ENCODE measurements at regions of chr19 and their contacts with region 1.

Region 1: DNA sequence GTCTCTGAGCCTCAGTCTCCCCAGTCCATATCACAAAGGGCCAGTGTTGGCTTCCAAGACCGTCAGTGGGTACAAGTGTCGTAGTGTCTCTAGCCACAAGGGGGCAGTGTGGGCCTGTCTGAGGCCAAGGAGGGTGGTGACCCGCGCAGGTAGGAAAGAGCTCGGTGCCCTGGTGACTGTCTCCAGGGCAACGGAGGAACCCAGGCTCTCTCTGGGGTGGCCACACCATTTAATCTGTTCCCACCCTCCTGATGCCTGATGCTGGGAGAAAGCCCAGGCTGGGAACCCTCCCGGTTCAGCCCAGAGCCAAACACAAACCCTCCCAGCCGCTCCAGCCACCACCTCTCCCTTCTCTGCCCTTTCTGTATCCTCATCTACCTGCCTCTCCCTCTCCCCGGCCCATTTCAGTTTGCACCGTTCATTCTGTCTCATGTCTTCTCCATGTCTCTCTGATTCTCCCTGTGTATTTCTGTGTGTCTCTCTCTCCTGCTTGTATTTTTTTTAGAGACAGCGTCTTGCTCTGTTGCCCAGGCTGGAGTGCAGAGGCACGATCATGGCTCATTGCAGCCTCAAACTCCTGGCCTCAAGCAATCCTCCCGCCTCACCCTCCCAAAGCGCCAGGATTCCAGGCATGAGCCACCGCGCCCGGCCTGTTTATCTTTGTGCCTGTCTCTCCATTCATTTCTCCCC is 17.5 kb upstream of the MEIS3 start:
- DNase-seq: peak; percentile 79 to 85 (median 80)
- ATAC-seq: peak; percentile 97
- H3K4me3 ChIP-seq: no peak overlapping the region
- H3K27ac ChIP-seq: no peak overlapping the region
- H3K4me1 ChIP-seq: peaks cover 0 to 4% of the 10 kb centered on the region in 2 experiments; a peak in 2 of 5 replicates
- H3K27me3 ChIP-seq: peaks cover 3 to 6% of the 10 kb centered on the region in 2 experiments; a peak in 1 of 5 replicates
- CTCF ChIP-seq: peak; percentile 89 to 93 (median 93)
- EP300 ChIP-seq: no peak
- POLR2A ChIP-seq: no peak
- RAD21 ChIP-seq: peak; percentile 93 to 98

Region 2: GRCh38 chr19:46967578-46968027 is 469.3 kb before region 1 on chr19:
- CTCF ChIA-PET with region 1: no interaction called
- POLR2A ChIA-PET with region 1: no interaction called
- in situ Hi-C with region 1: no loop called
- intact Hi-C with region 1: no loop called
- DNase-seq: no peak
- ATAC-seq: no peak
- H3K4me3 ChIP-seq: no peak overlapping the region
- H3K27ac ChIP-seq: no peak overlapping the region
- H3K4me1 ChIP-seq: no peaks in the 10 kb centered on the region; a peak in 1 of 5 replicates
- H3K27me3 ChIP-seq: no peaks in the 10 kb centered on the region
- CTCF ChIP-seq: no peak
- EP300 ChIP-seq: no peak
- POLR2A ChIP-seq: no peak
- RAD21 ChIP-seq: no peak

Region 3: GRCh38 chr19:47483800-47484690 is 47.2 kb after region 1 on chr19 and contains the start of gene KPTN:
- CTCF ChIA-PET with region 1: interaction called, 3 read pairs
- POLR2A ChIA-PET with region 1: no interaction called
- in situ Hi-C with region 1: no loop called
- intact Hi-C with region 1: loop called (anchors 5 kb)
- DNase-seq: peak; percentile 92 to 94 (median 94)
- ATAC-seq: peak; percentile 89
- H3K4me3 ChIP-seq: peak within 1 kb of the TSS; percentile 67
- H3K27ac ChIP-seq: peak within 1 kb of the TSS; percentile 88
- H3K4me1 ChIP-seq: peaks cover 7 to 44% of the 10 kb centered on the region in 2 experiments; a peak in 3 of 5 replicates
- H3K27me3 ChIP-seq: no peaks in the 10 kb centered on the region
- CTCF ChIP-seq: peak; percentile 94 to 99 (median 97)
- EP300 ChIP-seq: no peak; the same call in 1 of the 2 replicates
- POLR2A ChIP-seq: peak; percentile 87
- RAD21 ChIP-seq: peak; percentile 69 to 83
- polyA plus RNA-seq, gene KPTN: 0.56 to 2.7 TPM

Region 4: GRCh38 chr19:47507924-47508553 is 71.2 kb after region 1 on chr19:
- CTCF ChIA-PET with region 1: interaction called, 10 read pairs
- POLR2A ChIA-PET with region 1: interaction called, 6 read pairs
- in situ Hi-C with region 1: no loop called
- intact Hi-C with region 1: no loop called
- DNase-seq: no peak
- ATAC-seq: peak; percentile 72
- H3K4me3 ChIP-seq: no peak overlapping the region
- H3K27ac ChIP-seq: no peak overlapping the region
- H3K4me1 ChIP-seq: peaks cover 10 to 38% of the 10 kb centered on the region in 2 experiments
- H3K27me3 ChIP-seq: no peaks in the 10 kb centered on the region
- CTCF ChIP-seq: peak in 2 of 3 experiments; percentile 34 to 37; a peak in 3 of 6 replicates
- EP300 ChIP-seq: no peak
- POLR2A ChIP-seq: no peak
- RAD21 ChIP-seq: no peak

Region 5: DNA sequence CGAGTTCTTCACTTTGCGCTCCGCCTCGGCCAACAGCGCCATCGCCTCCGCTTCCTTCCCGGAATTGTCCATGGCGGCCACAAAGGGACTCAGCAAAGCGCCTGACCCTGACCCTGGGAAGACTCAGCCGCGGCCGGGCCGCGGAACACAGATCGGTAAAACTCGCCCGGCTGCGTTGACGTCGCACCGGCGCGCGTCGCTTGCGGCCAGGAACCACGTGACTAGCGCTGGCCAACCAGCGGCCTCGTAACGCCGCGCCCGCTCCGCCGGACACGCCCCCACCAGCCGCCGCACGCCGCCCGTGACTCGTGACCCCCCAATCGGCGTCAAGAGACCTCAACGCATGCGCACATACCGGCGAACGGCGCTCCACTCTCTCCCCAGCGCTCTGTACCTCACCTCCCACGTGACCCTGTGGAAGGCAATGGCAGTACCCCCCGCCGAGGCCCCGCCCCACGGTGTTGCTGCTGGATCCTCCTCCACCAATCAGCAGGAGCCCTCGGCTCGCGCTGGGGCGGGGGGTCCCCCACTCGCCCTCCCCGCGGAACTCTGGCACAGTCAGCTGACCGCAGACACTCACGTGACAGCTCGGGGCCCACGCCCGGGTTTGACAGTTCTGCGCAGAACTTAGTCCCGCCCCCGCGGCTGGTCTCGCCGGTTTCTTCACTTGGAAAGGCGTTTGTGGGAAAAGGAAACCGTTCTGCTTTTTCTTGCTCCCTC is 78.2 kb after region 1 on chr19 and contains the start of gene NAPA:
- CTCF ChIA-PET with region 1: no interaction called
- POLR2A ChIA-PET with region 1: no interaction called
- in situ Hi-C with region 1: no loop called
- intact Hi-C with region 1: loop called (anchors 5 kb)
- DNase-seq: peak; percentile 99 to 100 (median 99)
- ATAC-seq: peak; percentile 97
- H3K4me3 ChIP-seq: peak within 1 kb of the TSS; percentile 96
- H3K27ac ChIP-seq: peak within 1 kb of the TSS; percentile 92
- H3K4me1 ChIP-seq: peaks cover 20 to 44% of the 10 kb centered on the region in 2 experiments
- H3K27me3 ChIP-seq: no peaks in the 10 kb centered on the region
- CTCF ChIP-seq: no peak
- EP300 ChIP-seq: peak; percentile 50
- POLR2A ChIP-seq: peak; percentile 82
- RAD21 ChIP-seq: peak in 1 of 2 experiments; percentile 72; a peak in 2 of 4 replicates
- polyA plus RNA-seq, gene NAPA: 5.4 to 22.4 TPM

Region 6: GRCh38 chr19:47697863-47698609 is 261.2 kb after region 1 on chr19:
- CTCF ChIA-PET with region 1: interaction called, 79 read pairs
- POLR2A ChIA-PET with region 1: interaction called, 4 read pairs
- in situ Hi-C with region 1: loop called (anchors 5 kb)
- intact Hi-C with region 1: loop called (anchors 1 kb)
- DNase-seq: peak; percentile 82 to 86 (median 83)
- ATAC-seq: peak; percentile 92
- H3K4me3 ChIP-seq: no peak overlapping the region
- H3K27ac ChIP-seq: no peak overlapping the region
- H3K4me1 ChIP-seq: peaks cover 0 to 29% of the 10 kb centered on the region in 2 experiments; a peak in 2 of 5 replicates
- H3K27me3 ChIP-seq: no peaks in the 10 kb centered on the region
- CTCF ChIP-seq: peak; percentile 93 to 99 (median 98)
- EP300 ChIP-seq: no peak
- POLR2A ChIP-seq: no peak
- RAD21 ChIP-seq: peak; percentile 95 to 98

Region 7: DNA sequence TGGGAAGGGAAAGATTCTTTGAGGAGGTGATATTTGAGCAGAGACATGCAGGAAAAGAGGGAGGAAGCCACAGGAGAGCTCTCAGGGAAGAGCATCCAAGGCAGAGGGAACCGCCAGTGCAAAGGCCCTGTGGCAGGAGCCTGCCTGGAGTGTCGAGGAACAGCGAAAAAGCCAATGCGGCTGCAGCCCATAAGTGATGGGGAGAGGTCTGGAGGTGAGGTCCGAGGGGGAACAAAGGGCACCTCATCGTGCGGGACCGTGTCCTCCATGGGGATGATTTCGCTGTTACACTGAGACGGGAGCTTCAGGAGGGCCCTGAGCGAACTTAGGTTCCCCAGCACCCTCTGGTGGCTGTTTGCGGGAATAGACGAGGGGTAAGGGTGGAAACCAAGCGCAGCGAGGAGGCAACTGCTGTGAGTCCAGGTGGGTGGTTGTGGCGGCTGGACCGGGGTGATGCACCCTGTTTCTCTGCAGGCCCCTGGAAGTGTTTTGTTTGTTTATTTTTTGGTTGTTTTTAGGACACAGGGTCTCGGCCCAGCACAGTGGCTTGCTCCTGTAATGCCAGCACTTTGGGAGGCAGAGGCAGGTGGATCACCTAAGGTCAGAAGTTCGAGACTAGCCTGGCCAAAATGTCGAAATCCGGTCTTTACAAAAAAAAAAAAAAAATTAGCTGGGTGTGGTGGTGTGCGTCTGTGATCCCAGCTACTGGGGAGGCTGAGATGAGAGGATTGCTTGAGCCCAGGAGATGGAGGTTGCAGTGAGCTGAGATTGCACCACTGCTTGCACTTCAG is 270.5 kb after region 1 on chr19:
- CTCF ChIA-PET with region 1: interaction called, 28 read pairs
- POLR2A ChIA-PET with region 1: interaction called, 6 read pairs
- in situ Hi-C with region 1: no loop called
- intact Hi-C with region 1: no loop called
- DNase-seq: peak; percentile 72 to 89 (median 76)
- ATAC-seq: peak; percentile 99
- H3K4me3 ChIP-seq: no peak overlapping the region
- H3K27ac ChIP-seq: no peak overlapping the region
- H3K4me1 ChIP-seq: peaks cover 0 to 5% of the 10 kb centered on the region in 2 experiments; a peak in 2 of 5 replicates
- H3K27me3 ChIP-seq: no peaks in the 10 kb centered on the region
- CTCF ChIP-seq: peak; percentile 90 to 95 (median 92)
- EP300 ChIP-seq: no peak
- POLR2A ChIP-seq: no peak
- RAD21 ChIP-seq: peak; percentile 72 to 93

Measured in K562 (cell line).